Activated T-helper 1 cell treated with anti-CD3 and anti-CD28 coated beads, Interleukin-12 subunit alpha, Interleukin-12 subunit beta, Interleukin-2, Interleukin-4 antibody, amounts not matched to agents 30 ng/mL and 10 ng/mL and 1 ng/mL, durations not matched to agents 14 hours and 24 hours and 36 hours (primary cell): ENCODE measurements at regions of chr3 and their contacts with region 1.

Region 1: DNA sequence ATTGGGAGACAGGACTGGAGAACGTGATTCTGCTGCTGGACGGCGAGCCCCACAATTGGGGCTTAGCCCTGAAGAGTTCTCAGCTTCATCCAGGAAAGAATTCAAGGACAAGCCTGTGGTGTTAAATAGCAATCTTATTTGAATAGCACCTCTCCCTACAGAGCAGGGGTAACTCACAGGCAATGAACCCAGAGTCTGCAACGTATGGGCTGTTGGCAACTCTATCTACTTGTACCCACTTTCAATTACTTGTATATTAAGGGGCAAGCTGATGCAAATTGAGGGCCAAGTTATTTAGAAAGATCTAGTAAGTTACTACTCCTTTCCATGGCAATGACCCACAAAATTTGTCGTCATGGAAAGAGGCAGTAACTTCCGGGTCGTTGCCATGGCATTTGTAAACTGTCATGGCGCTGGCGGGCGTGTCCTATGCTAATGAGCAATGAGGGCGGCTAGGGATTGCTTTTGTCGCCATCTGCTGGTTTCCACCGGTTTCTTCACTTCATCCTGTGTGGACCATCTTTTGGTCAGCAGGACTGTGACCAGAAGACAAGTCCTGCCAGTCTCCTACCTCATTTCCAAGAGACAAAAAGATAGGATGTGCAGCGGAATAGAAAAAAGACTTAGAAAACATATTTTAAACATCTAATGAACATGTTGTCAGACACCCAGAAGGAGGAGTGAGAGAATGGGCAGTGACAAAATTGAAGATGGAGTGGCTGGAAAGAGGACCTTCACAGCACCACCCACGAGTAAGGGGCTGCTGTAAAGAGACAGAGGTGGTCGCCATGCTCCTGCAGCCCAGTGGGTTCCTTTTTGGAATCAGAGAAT is 45.8 kb upstream of the SH3BP5 start:
- DNase-seq: peak; percentile 93
- H3K4me3 Mint-ChIP-seq: no peak overlapping the region
- H3K27ac Mint-ChIP-seq: peak overlapping the region; percentile 80
- H3K4me1 Mint-ChIP-seq: peaks cover 20% of the 10 kb centered on the region
- H3K27me3 Mint-ChIP-seq: peaks cover 5% of the 10 kb centered on the region

Region 2: DNA sequence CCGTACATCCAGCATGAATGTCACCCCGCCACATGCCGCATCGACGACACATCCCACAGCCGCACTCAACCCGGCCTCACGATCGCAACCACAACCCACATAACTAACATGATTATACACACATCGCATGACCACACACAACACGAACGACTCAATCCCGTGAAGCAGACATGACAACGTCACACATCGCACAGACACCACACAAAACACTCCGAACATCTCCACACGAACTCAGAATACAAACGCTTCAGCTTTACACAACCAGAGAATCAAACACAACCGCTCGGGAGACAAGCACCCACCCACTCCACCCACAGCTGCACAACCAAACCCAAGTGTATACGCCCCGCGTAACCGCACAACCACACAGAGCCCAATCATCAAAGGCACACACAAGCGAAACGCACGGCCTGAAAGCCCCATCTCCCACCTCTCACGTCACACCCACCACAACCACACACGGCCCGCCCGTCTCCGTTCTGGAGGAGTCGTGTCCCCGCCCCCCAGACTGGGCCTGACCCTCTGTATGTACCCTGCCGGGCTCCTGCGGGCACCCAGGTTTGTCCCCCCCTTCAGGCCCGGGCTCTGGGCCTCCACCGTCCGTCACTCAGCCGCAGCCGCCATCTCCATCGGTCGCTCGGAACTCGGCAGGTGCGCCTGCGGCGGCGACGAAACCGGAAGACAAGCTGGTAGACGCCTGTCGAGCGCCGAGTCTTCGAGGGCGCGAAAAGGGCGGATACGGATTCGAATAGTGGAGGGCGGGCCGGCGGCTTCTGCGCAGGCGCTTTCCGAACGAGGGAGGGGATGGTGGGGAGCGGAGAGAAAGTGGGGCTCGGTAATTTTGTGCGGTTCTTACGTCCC is 279.4 kb before region 1 on chr3 and contains the start of gene RBSN:
- intact Hi-C with region 1: loop called (anchors 1 kb)
- DNase-seq: peak; percentile 95
- H3K4me3 Mint-ChIP-seq: peak within 1 kb of the TSS; percentile 92
- H3K27ac Mint-ChIP-seq: peak within 1 kb of the TSS; percentile 98
- H3K4me1 Mint-ChIP-seq: peaks cover 22% of the 10 kb centered on the region
- H3K27me3 Mint-ChIP-seq: peaks cover 2% of the 10 kb centered on the region
- total RNA-seq, gene RBSN: 11.7 and 12.5 TPM in 2 replicates

Region 3: GRCh38 chr3:15291589-15292541 is 86.3 kb before region 1 on chr3:
- intact Hi-C with region 1: loop called (anchors 1 kb)
- DNase-seq: peak; percentile 74
- H3K4me3 Mint-ChIP-seq: peak overlapping the region; percentile 63
- H3K27ac Mint-ChIP-seq: peak overlapping the region; percentile 78
- H3K4me1 Mint-ChIP-seq: peaks cover 89% of the 10 kb centered on the region
- H3K27me3 Mint-ChIP-seq: no peaks in the 10 kb centered on the region

Region 4: GRCh38 chr3:15332405-15333098 is 45.6 kb before region 1 on chr3 and contains the start of gene SH3BP5:
- intact Hi-C with region 1: loop called (anchors 1 kb)
- DNase-seq: peak; percentile 73
- H3K4me3 Mint-ChIP-seq: peak within 1 kb of the TSS; percentile 94
- H3K27ac Mint-ChIP-seq: peak within 1 kb of the TSS; percentile 89
- H3K4me1 Mint-ChIP-seq: peaks cover 72% of the 10 kb centered on the region
- H3K27me3 Mint-ChIP-seq: no peaks in the 10 kb centered on the region
- total RNA-seq, gene SH3BP5: 28.0 and 30.3 TPM in 2 replicates

Region 5: GRCh38 chr3:15405448-15406050 is 27.4 kb after region 1 on chr3:
- intact Hi-C with region 1: loop called (anchors 1 kb)
- DNase-seq: no peak
- H3K4me3 Mint-ChIP-seq: no peak overlapping the region
- H3K27ac Mint-ChIP-seq: no peak overlapping the region
- H3K4me1 Mint-ChIP-seq: peaks cover 6% of the 10 kb centered on the region
- H3K27me3 Mint-ChIP-seq: no peaks in the 10 kb centered on the region

Region 6: GRCh38 chr3:15557511-15557946 is 179.4 kb after region 1 on chr3:
- intact Hi-C with region 1: loop called (anchors 5 kb)
- DNase-seq: peak; percentile 60
- H3K4me3 Mint-ChIP-seq: no peak overlapping the region
- H3K27ac Mint-ChIP-seq: no peak overlapping the region
- H3K4me1 Mint-ChIP-seq: peaks cover 32% of the 10 kb centered on the region
- H3K27me3 Mint-ChIP-seq: no peaks in the 10 kb centered on the region

Region 7: GRCh38 chr3:15753056-15753710 is 375.0 kb after region 1 on chr3:
- intact Hi-C with region 1: no loop called
- DNase-seq: no peak
- H3K4me3 Mint-ChIP-seq: no peak overlapping the region
- H3K27ac Mint-ChIP-seq: no peak overlapping the region
- H3K4me1 Mint-ChIP-seq: peaks cover 16% of the 10 kb centered on the region
- H3K27me3 Mint-ChIP-seq: no peaks in the 10 kb centered on the region